ENCODE measurements at regions of chr1 and their contacts with region 1.

Region 1: DNA sequence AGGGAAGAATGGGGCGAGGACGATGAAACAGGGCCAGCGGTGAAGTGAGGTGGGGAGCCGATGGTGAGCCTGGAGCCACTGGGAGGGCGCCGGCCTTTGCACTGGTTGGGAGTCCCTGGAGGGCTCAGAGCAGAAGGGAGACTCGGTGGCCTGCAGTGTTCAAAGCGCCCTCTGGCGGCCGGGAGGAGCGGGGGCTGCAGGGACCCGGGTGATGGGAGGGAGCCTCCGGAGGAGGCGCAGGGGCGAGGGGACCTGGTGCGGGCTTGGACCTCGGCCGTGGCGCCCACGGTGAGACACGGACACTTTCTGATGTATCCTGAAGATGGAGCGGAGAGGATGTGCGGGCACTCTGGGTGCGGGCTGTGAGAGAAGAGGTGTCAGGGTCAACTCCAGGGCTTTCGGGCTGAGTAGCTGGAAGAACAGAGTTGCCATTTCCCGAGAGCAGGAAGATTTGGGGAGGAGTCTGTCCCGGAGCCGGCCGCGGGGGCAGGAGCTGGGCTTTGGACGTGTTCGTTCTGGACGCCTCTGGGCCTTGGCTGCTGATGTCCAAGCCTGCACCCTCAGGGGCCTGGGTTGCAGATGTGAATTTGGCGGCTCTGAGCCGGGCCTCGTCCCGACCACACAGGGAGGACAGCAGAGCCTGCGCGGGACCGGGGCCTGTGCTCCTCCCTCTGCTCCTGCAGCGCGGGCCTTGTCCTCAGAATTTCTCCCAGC is 29.7 kb downstream of the HEYL start:
- DNase-seq: peak; percentile 54 to 67
- H3K4me3 ChIP-seq: no peak overlapping the region
- H3K4me3 Mint-ChIP-seq: no peak overlapping the region
- H3K27ac Mint-ChIP-seq: no peak overlapping the region
- H3K4me1 ChIP-seq: no peaks in the 10 kb centered on the region
- H3K4me1 Mint-ChIP-seq: no peaks in the 10 kb centered on the region
- H3K27me3 ChIP-seq: no peaks in the 10 kb centered on the region
- H3K27me3 Mint-ChIP-seq: no peaks in the 10 kb centered on the region
- CTCF ChIP-seq: peak; percentile 50 to 52

Region 2: GRCh38 chr1:39488793-39489566 is 120.8 kb before region 1 on chr1:
- CTCF ChIA-PET with region 1: no interaction called
- POLR2A ChIA-PET with region 1: no interaction called
- intact Hi-C with region 1: no loop called
- DNase-seq: no peak
- H3K4me3 ChIP-seq: no peak overlapping the region
- H3K4me3 Mint-ChIP-seq: no peak overlapping the region
- H3K27ac Mint-ChIP-seq: no peak overlapping the region
- H3K4me1 ChIP-seq: no peaks in the 10 kb centered on the region
- H3K4me1 Mint-ChIP-seq: no peaks in the 10 kb centered on the region
- H3K27me3 ChIP-seq: no peaks in the 10 kb centered on the region
- H3K27me3 Mint-ChIP-seq: no peaks in the 10 kb centered on the region
- CTCF ChIP-seq: no peak

Region 3: GRCh38 chr1:39639305-39640130 is 29.7 kb after region 1 on chr1 and contains the start of gene HEYL:
- CTCF ChIA-PET with region 1: interaction called, 11 read pairs
- POLR2A ChIA-PET with region 1: no interaction called
- intact Hi-C with region 1: loop called (anchors 1 kb)
- DNase-seq: peak; percentile 86 to 87
- H3K4me3 ChIP-seq: peak within 1 kb of the TSS; percentile 68
- H3K4me3 Mint-ChIP-seq: peak within 1 kb of the TSS; percentile 78
- H3K27ac Mint-ChIP-seq: no peak within 1 kb of the TSS
- H3K4me1 ChIP-seq: peaks cover 6% of the 10 kb centered on the region; the same call in 1 of the 2 replicates
- H3K4me1 Mint-ChIP-seq: no peaks in the 10 kb centered on the region
- H3K27me3 ChIP-seq: no peaks in the 10 kb centered on the region
- H3K27me3 Mint-ChIP-seq: no peaks in the 10 kb centered on the region
- CTCF ChIP-seq: peak; percentile 41 to 77
- total RNA-seq, gene HEYL: 3.0 and 3.4 TPM in 2 replicates

Region 4: DNA sequence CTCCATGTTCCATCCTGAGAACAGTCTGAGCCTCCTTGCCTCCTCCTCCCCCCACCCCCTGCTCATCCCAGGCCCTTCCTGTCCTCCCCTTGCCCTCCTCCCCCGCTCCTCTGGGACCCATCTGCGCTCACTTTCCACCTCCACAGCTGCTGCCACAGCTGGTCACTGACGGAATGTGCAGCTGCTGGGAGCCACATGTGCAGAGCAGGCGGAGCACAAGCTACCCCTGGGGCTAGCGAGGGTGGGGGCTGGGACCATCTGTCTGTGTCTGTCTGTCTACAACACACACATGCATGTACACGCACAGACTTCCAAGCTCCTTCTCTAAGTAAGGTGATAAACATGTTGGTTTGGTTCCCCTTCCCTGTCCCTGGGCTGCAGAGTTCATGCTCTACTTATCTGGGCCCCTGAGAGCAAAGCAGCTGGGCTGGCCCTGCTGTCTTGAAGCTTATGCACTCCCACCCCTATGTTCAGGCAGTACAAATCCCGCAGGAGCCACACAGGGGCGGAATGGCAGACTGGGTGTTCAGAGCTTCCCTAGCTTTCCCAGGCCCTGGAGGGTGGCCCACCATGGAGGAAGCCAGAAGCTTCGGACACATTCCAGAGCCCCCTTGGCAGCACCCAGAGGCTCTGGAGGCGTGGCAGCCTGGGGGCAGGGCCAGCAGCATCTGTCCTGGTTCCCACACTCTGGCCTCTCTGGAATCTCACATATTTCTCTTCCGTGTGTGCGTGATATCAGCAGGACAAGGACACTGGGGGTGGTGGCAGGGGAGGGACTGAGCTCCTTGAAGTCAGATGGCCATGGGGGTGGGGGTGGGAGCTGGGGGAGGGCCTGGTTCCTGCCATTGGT is 36.7 kb after region 1 on chr1:
- CTCF ChIA-PET with region 1: interaction called, 15 read pairs
- POLR2A ChIA-PET with region 1: no interaction called
- intact Hi-C with region 1: no loop called
- DNase-seq: peak; percentile 52 to 73
- H3K4me3 ChIP-seq: no peak overlapping the region
- H3K4me3 Mint-ChIP-seq: no peak overlapping the region
- H3K27ac Mint-ChIP-seq: peak overlapping the region; percentile 64
- H3K4me1 ChIP-seq: peaks cover 5% of the 10 kb centered on the region
- H3K4me1 Mint-ChIP-seq: peaks cover 7% of the 10 kb centered on the region
- H3K27me3 ChIP-seq: no peaks in the 10 kb centered on the region
- H3K27me3 Mint-ChIP-seq: no peaks in the 10 kb centered on the region
- CTCF ChIP-seq: no peak

Region 5: GRCh38 chr1:39653546-39654031 is 43.8 kb after region 1 on chr1:
- CTCF ChIA-PET with region 1: interaction called, 24 read pairs
- POLR2A ChIA-PET with region 1: no interaction called
- intact Hi-C with region 1: loop called (anchors 1 kb)
- DNase-seq: peak; percentile 67 to 68
- H3K4me3 ChIP-seq: no peak overlapping the region
- H3K4me3 Mint-ChIP-seq: no peak overlapping the region
- H3K27ac Mint-ChIP-seq: no peak overlapping the region
- H3K4me1 ChIP-seq: no peaks in the 10 kb centered on the region
- H3K4me1 Mint-ChIP-seq: no peaks in the 10 kb centered on the region
- H3K27me3 ChIP-seq: no peaks in the 10 kb centered on the region
- H3K27me3 Mint-ChIP-seq: peaks cover 3% of the 10 kb centered on the region
- CTCF ChIP-seq: peak; percentile 71 to 73

Region 6: GRCh38 chr1:39720094-39720999 is 110.6 kb after region 1 on chr1:
- CTCF ChIA-PET with region 1: interaction called, 6 read pairs
- POLR2A ChIA-PET with region 1: no interaction called
- intact Hi-C with region 1: loop called (anchors 1 kb)
- DNase-seq: peak in 1 of 2 experiments; percentile 54
- H3K4me3 ChIP-seq: no peak overlapping the region
- H3K4me3 Mint-ChIP-seq: no peak overlapping the region
- H3K27ac Mint-ChIP-seq: no peak overlapping the region
- H3K4me1 ChIP-seq: no peaks in the 10 kb centered on the region
- H3K4me1 Mint-ChIP-seq: no peaks in the 10 kb centered on the region
- H3K27me3 ChIP-seq: no peaks in the 10 kb centered on the region
- H3K27me3 Mint-ChIP-seq: peaks cover 8% of the 10 kb centered on the region
- CTCF ChIP-seq: peak; percentile 17 to 35